ENCODE measurements at regions of chr14 and their contacts with region 1.

Region 1: GRCh38 chr14:68788996-68789820 is 3.7 kb downstream of the ZFP36L1 start:
- DNase-seq: peak; percentile 79
- H3K4me3 Mint-ChIP-seq: peak overlapping the region; percentile 98
- H3K27ac Mint-ChIP-seq: peak overlapping the region; percentile 97
- H3K4me1 Mint-ChIP-seq: peaks cover 30% of the 10 kb centered on the region
- H3K27me3 Mint-ChIP-seq: no peaks in the 10 kb centered on the region
- CTCF ChIP-seq: peak; percentile 69

Region 2: DNA sequence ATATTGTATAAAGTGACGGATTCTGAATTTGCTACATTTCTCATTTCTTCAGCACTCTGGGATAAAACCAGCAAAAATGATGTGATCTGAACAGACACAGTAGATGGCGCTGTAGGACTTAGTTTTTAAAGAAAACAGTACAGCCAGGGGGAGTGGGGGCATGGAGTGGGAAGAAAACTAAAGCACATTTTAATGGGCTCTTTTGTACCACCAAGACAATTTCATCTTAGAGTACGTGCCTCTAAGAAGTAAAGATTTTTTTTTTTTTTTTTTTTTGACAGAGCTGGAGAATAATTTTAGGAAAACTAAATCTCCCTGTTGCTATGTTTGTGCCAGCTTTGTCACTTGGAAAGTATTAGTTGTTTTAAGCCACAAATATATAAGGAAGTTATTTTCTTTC is 845.3 kb before region 1 on chr14:
- CTCF ChIA-PET with region 1: interaction called, 6 read pairs
- POLR2A ChIA-PET with region 1: interaction called, 22 read pairs
- intact Hi-C with region 1: loop called (anchors 1 kb)
- DNase-seq: peak; percentile 77
- H3K4me3 Mint-ChIP-seq: no peak overlapping the region
- H3K27ac Mint-ChIP-seq: peak overlapping the region; percentile 81
- H3K4me1 Mint-ChIP-seq: peaks cover 39% of the 10 kb centered on the region
- H3K27me3 Mint-ChIP-seq: no peaks in the 10 kb centered on the region
- CTCF ChIP-seq: peak; percentile 81

Region 3: DNA sequence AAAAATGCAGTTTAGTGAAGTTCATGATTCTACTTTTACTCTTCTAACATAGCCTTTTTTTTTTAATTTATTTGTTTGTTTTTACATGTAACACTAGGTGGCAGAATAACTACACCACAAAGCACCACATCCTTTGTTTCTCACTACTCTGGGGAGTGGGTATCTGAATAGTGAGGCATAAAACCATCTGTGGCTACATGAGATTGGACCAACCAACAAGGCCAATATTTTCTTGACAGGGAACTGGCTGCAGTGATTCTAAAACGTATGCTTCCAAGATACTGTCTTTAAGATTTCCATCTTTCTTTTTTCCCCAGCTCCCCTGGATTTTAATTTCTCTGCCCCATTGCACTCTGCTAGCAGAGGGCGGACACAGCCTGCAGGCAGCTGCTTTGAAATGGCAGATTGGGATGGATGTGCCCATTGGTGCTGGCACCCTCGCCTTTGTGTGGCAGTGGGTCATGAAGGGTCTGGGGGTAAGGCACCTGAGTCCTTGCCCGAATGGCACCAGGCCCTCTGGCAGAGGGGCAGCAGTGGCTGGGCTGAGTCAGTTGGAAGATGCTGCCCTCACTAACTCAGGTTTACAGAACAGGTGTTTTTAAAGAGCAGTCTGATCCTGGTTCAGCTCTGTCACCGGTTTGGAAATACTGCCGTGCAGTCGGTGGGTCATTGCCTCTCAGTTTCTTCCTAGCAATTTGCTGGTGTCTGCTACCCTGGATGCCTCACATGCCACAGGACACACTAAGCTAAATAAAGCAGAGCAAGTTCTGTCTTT is 540.5 kb before region 1 on chr14:
- CTCF ChIA-PET with region 1: interaction called, 72 read pairs
- POLR2A ChIA-PET with region 1: interaction called, 267 read pairs
- intact Hi-C with region 1: loop called (anchors 1 kb)
- DNase-seq: peak; percentile 60
- H3K4me3 Mint-ChIP-seq: peak overlapping the region; percentile 21
- H3K27ac Mint-ChIP-seq: peak overlapping the region; percentile 80
- H3K4me1 Mint-ChIP-seq: peaks cover 57% of the 10 kb centered on the region
- H3K27me3 Mint-ChIP-seq: no peaks in the 10 kb centered on the region
- CTCF ChIP-seq: peak; percentile 67

Region 4: DNA sequence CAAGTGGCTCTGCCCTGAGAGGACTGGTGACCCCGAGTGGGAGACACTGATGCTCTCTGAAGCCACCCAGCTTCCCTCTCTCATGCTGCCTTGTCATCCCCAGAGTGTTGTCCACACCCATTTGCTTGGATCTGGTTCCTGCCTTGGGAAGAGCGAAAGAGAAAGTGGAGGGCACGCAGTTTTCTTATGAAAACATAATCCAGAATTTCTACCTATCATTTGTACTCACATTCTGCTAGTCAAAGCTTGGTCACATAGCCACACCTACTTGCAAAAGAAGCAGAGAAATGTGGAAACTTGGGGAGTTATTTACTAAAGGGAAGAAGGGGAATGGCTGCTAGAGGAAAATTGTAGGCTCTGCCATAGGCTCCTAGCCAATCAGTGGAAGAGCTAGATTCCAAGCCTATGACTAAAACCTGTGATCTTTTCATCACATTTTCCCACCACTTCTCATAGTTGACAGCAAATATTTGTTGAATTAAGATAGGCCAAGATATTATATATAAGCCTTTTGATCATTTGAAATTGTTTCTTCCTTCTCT is 322.6 kb before region 1 on chr14:
- CTCF ChIA-PET with region 1: interaction called, 5 read pairs
- POLR2A ChIA-PET with region 1: interaction called, 25 read pairs
- intact Hi-C with region 1: loop called (anchors 5 kb)
- DNase-seq: peak; percentile 93
- H3K4me3 Mint-ChIP-seq: peak overlapping the region; percentile 60
- H3K27ac Mint-ChIP-seq: peak overlapping the region; percentile 75
- H3K4me1 Mint-ChIP-seq: peaks cover 65% of the 10 kb centered on the region
- H3K27me3 Mint-ChIP-seq: no peaks in the 10 kb centered on the region
- CTCF ChIP-seq: no peak

Region 5: GRCh38 chr14:68526420-68527105 is 262.6 kb before region 1 on chr14:
- CTCF ChIA-PET with region 1: interaction called, 4 read pairs
- POLR2A ChIA-PET with region 1: interaction called, 17 read pairs
- intact Hi-C with region 1: no loop called
- DNase-seq: peak; percentile 81
- H3K4me3 Mint-ChIP-seq: no peak overlapping the region
- H3K27ac Mint-ChIP-seq: peak overlapping the region; percentile 91
- H3K4me1 Mint-ChIP-seq: peaks cover 32% of the 10 kb centered on the region
- H3K27me3 Mint-ChIP-seq: no peaks in the 10 kb centered on the region
- CTCF ChIP-seq: no peak

Region 6: DNA sequence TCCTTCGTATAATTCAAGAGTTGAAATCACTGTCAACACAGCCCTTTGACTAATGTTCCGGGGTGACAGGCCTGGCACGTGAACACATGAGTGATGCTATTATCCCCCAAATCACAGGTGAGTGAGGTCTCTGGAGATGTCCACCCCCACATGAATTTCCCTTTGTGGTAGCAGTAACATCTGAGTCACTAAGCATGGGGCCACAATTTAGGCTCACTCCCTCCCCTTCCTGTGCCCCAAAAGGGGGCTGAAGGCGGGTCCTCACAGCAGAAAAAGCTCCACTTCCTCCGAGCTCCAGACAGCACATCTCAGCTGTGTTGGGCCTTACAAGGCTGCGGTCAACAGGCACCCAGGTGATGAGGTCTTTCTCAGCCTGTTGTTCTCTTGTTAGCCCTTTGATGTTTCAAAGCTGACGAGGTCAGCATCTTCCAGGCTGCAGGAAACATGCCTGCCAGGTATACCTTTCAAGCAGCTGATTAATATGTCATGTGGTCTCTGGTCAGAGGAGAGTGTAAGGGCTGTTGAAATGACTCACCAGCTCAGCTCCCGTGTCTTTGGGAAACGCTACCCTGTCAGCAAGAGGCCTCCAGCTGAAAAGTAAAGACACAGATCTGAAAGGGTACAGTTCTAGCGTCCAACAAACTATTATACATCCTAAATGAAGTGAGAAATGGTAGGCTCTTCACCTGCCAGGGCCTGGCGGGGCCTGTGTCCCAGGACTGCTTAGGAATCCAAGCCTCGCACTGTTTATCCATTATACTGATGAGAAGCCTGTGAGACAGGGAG is 103.6 kb before region 1 on chr14:
- CTCF ChIA-PET with region 1: interaction called, 8 read pairs
- POLR2A ChIA-PET with region 1: interaction called, 229 read pairs
- intact Hi-C with region 1: loop called (anchors 2 kb)
- DNase-seq: peak; percentile 91
- H3K4me3 Mint-ChIP-seq: peak overlapping the region; percentile 1
- H3K27ac Mint-ChIP-seq: peak overlapping the region; percentile 96
- H3K4me1 Mint-ChIP-seq: peaks cover 67% of the 10 kb centered on the region
- H3K27me3 Mint-ChIP-seq: no peaks in the 10 kb centered on the region
- CTCF ChIP-seq: no peak

Region 7: GRCh38 chr14:68703093-68703492 is 86.1 kb before region 1 on chr14:
- CTCF ChIA-PET with region 1: interaction called, 4 read pairs
- POLR2A ChIA-PET with region 1: interaction called, 12 read pairs
- intact Hi-C with region 1: no loop called
- DNase-seq: peak; percentile 91
- H3K4me3 Mint-ChIP-seq: no peak overlapping the region
- H3K27ac Mint-ChIP-seq: peak overlapping the region; percentile 67
- H3K4me1 Mint-ChIP-seq: peaks cover 43% of the 10 kb centered on the region
- H3K27me3 Mint-ChIP-seq: no peaks in the 10 kb centered on the region
- CTCF ChIP-seq: no peak

Region 8: DNA sequence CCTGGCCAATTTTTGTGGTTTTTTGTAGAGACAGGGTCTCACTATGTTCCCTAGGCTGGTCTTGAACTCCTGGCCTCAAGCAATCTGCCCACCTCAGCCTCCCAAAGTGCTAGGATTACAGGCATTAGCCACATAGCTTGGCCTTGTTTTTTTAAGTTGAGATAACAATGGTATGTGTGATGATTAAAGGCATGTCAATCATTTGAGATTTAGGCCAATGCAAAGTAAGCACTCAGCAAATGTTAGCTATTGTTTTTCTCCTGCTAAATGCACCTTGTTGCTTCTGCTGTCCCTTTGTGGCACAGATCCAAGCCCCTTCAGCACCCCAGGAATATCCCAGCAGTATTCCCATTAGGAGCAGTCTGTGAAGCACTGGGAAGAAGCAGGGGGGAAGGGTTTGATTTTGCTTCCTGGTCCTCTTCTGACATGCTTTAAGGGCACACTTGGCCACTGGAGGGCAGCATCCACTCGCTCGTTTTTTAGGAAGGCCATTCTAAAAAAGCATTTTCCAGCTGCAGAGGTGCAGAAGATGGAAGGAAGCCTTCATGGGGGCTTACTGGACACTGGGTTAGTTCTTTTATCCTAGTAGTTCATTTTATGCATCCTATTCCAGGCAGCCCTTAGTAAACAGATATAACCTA is 73.9 kb after region 1 on chr14:
- CTCF ChIA-PET with region 1: no interaction called
- POLR2A ChIA-PET with region 1: no interaction called
- intact Hi-C with region 1: no loop called
- DNase-seq: peak; percentile 85
- H3K4me3 Mint-ChIP-seq: no peak overlapping the region
- H3K27ac Mint-ChIP-seq: no peak overlapping the region
- H3K4me1 Mint-ChIP-seq: no peaks in the 10 kb centered on the region
- H3K27me3 Mint-ChIP-seq: no peaks in the 10 kb centered on the region
- CTCF ChIP-seq: peak; percentile 71

Measured in MCF 10A (cell line).